ENCODE measurements at regions of chr2 and their contacts with region 1.

Region 1: GRCh38 chr2:179751163-179751809 is 110.1 kb downstream of the ZNF385B start:
- DNase-seq: no peak
- H3K4me3 ChIP-seq: no peak overlapping the region
- H3K27ac ChIP-seq: no peak overlapping the region
- H3K4me1 ChIP-seq: no peaks in the 10 kb centered on the region
- H3K27me3 ChIP-seq: no peaks in the 10 kb centered on the region
- CTCF ChIP-seq: peak in 5 of 6 experiments; percentile 29 to 76 (median 64)
- POLR2A ChIP-seq: no peak

Region 2: GRCh38 chr2:179422037-179422643 is 329.1 kb before region 1 on chr2:
- intact Hi-C with region 1: loop called (anchors 5 kb)
- DNase-seq: peak; percentile 66 to 76
- H3K4me3 ChIP-seq: no peak overlapping the region
- H3K27ac ChIP-seq: no peak overlapping the region
- H3K4me1 ChIP-seq: no peaks in the 10 kb centered on the region
- H3K27me3 ChIP-seq: no peaks in the 10 kb centered on the region
- CTCF ChIP-seq: peak in 5 of 6 experiments; percentile 25 to 78 (median 65)
- POLR2A ChIP-seq: no peak

Region 3: DNA sequence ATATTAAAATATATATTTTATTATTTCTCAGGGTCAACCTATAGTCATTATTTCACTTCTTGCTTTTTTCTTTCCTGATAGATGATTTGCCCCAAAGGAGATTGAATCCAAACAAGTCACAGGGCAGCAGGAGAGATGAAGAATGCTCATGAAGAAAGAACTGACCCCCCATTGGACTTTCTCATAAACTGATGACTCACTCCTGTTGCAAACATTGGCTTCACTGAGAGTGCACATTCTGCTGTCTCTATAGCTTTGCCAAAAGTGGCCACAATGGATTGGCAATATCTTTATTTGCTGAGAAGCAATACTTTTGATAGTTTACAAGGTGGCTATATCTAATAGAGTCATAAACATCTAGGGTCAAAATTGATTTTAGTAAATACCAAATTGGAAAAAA is 166.0 kb after region 1 on chr2:
- intact Hi-C with region 1: no loop called
- DNase-seq: no peak
- H3K4me3 ChIP-seq: no peak overlapping the region
- H3K27ac ChIP-seq: no peak overlapping the region
- H3K4me1 ChIP-seq: no peaks in the 10 kb centered on the region
- H3K27me3 ChIP-seq: no peaks in the 10 kb centered on the region
- CTCF ChIP-seq: no peak
- POLR2A ChIP-seq: no peak

Measured in thyroid gland (tissue), 4 donors.